ENCODE measurements at regions of chr10 and their contacts with region 1.

Region 1: GRCh38 chr10:122980209-122981065 is at the start of gene PSTK:
- DNase-seq: peak; percentile 98
- ATAC-seq: peak; percentile 95
- H3K4me3 ChIP-seq: peak within 1 kb of the TSS; percentile 55 to 86 (median 64)
- H3K4me3 Mint-ChIP-seq: peak within 1 kb of the TSS; percentile 97
- H3K27ac ChIP-seq: peak within 1 kb of the TSS; percentile 81 to 89
- H3K27ac Mint-ChIP-seq: peak within 1 kb of the TSS; percentile 99
- H3K4me1 ChIP-seq: peaks cover 10 to 15% of the 10 kb centered on the region in 2 donors
- H3K4me1 Mint-ChIP-seq: peaks cover 14% of the 10 kb centered on the region
- H3K27me3 ChIP-seq: no peaks in the 10 kb centered on the region
- H3K27me3 Mint-ChIP-seq: peaks cover 5% of the 10 kb centered on the region
- CTCF ChIP-seq: peak; percentile 97
- total RNA-seq, gene PSTK: 8.2 and 8.5 TPM in 2 replicates

Region 2: GRCh38 chr10:122879339-122880273 is 100.8 kb before region 1 on chr10 and contains the start of gene FAM24B:
- CTCF ChIA-PET with region 1: no interaction called
- POLR2A ChIA-PET with region 1: no interaction called
- intact Hi-C with region 1: loop called (anchors 1 kb)
- DNase-seq: peak; percentile 96
- ATAC-seq: peak; percentile 84
- H3K4me3 ChIP-seq: peak within 1 kb of the TSS; percentile 49 to 83 (median 64)
- H3K4me3 Mint-ChIP-seq: peak within 1 kb of the TSS; percentile 86
- H3K27ac ChIP-seq: peak within 1 kb of the TSS; percentile 62 to 86
- H3K27ac Mint-ChIP-seq: peak within 1 kb of the TSS; percentile 92
- H3K4me1 ChIP-seq: peaks cover 12 to 17% of the 10 kb centered on the region in 2 donors
- H3K4me1 Mint-ChIP-seq: peaks cover 39% of the 10 kb centered on the region
- H3K27me3 ChIP-seq: no peaks in the 10 kb centered on the region
- H3K27me3 Mint-ChIP-seq: no peaks in the 10 kb centered on the region
- CTCF ChIP-seq: no peak
- total RNA-seq, gene FAM24B: 11.7 and 12.5 TPM in 2 replicates

Region 3: DNA sequence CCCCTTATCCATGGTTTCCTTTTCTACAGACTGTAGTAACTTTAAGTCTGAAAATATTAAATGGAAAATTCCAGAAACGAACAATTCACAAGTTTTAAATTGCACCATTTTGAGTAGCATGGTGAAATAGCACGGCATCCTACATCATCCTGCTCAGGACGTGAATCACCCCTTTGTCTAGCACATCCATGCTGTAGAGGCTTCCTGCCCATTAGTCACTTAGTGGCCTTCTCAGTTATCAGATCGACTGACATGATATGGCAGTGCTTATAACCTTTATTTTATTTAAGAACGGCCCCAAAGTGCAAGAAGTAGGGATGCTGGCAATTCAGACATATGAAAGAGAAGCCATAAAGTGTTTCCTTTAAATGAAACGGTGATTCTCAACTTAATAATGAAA is 828.5 kb after region 1 on chr10:
- CTCF ChIA-PET with region 1: no interaction called
- POLR2A ChIA-PET with region 1: no interaction called
- intact Hi-C with region 1: no loop called
- DNase-seq: no peak
- ATAC-seq: no peak
- H3K4me3 ChIP-seq: no peak overlapping the region
- H3K4me3 Mint-ChIP-seq: no peak overlapping the region
- H3K27ac ChIP-seq: no peak overlapping the region
- H3K27ac Mint-ChIP-seq: no peak overlapping the region
- H3K4me1 ChIP-seq: no peaks in the 10 kb centered on the region
- H3K4me1 Mint-ChIP-seq: no peaks in the 10 kb centered on the region
- H3K27me3 ChIP-seq: peaks cover 0 to 12% (median 2%) of the 10 kb centered on the region in 4 experiments
- H3K27me3 Mint-ChIP-seq: peaks cover 37% of the 10 kb centered on the region
- CTCF ChIP-seq: no peak